ENCODE measurements at regions of chr1 and their contacts with region 1.

Region 1: DNA sequence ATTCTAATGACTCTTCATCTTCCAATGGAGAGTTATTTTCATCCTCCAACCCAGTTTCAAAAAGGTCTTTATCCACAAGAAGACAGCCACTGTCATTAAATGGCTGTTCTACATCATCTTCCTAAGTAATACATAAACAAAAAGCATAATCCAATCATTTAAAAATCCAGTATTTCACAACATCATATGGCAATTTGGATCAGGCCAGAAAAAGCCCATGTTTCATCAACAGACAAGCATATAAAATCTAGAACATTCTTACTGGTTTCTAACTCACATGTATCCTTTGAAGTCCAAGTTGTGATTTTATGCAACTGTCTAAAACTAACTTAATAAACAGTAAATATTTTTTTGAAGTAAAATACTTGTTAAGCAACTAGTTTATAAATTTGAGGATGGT is 6.6 kb downstream of the CLSPN start:
- DNase-seq: no peak
- H3K4me3 ChIP-seq: no peak overlapping the region
- H3K27ac ChIP-seq: no peak overlapping the region
- H3K4me1 ChIP-seq: no peaks in the 10 kb centered on the region
- H3K27me3 ChIP-seq: no peaks in the 10 kb centered on the region
- CTCF ChIP-seq: no peak

Region 2: DNA sequence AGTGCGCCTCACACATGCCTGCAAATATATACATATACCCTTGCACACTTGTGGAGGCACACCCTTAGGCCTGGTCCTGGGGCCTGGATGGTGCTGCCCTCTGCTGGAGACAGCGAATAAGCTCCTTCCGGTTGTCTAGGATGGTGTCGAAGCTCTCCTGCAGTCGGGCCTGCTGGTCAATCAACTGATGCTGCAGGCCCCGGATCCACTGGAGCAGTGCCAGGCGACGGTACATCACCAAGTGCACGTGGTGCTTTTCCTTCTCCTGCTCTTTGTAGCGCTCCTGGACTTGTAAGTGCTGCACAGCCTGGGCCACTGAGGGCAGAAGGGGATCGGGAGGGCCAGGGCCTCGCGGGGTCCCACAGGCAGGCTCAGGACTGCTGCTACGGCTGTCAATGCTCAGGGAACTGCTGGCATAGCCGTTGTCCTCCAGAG is 47.6 kb before region 1 on chr1:
- CTCF ChIA-PET with region 1: interaction called, 15 read pairs
- POLR2A ChIA-PET with region 1: no interaction called
- intact Hi-C with region 1: no loop called
- DNase-seq: peak; percentile 41 to 61
- H3K4me3 ChIP-seq: no peak overlapping the region
- H3K27ac ChIP-seq: no peak overlapping the region
- H3K4me1 ChIP-seq: no peaks in the 10 kb centered on the region
- H3K27me3 ChIP-seq: no peaks in the 10 kb centered on the region
- CTCF ChIP-seq: peak; percentile 87